Endothelial cell of umbilical vein (primary cell): ENCODE measurements at regions of chr3 and their contacts with region 1.

Region 1: GRCh38 chr3:195162033-195162669 is 108.8 kb downstream of the XXYLT1 start:
- DNase-seq: peak; percentile 99
- H3K4me3 ChIP-seq: no peak overlapping the region
- H3K27ac ChIP-seq: peak overlapping the region; percentile 95
- H3K4me1 ChIP-seq: peaks cover 85% of the 10 kb centered on the region
- H3K27me3 ChIP-seq: no peaks in the 10 kb centered on the region
- CTCF ChIP-seq: no peak
- POLR2A ChIP-seq: peak; percentile 89

Region 2: GRCh38 chr3:195106418-195106906 is 55.7 kb before region 1 on chr3:
- CTCF ChIA-PET with region 1: no interaction called
- POLR2A ChIA-PET with region 1: no interaction called
- dilution Hi-C with region 1: no loop called
- intact Hi-C with region 1: no loop called
- DNase-seq: peak; percentile 76
- H3K4me3 ChIP-seq: no peak overlapping the region
- H3K27ac ChIP-seq: peak overlapping the region; percentile 96
- H3K4me1 ChIP-seq: peaks cover 44% of the 10 kb centered on the region
- H3K27me3 ChIP-seq: no peaks in the 10 kb centered on the region
- CTCF ChIP-seq: peak; percentile 97 to 98
- POLR2A ChIP-seq: no peak

Region 3: DNA sequence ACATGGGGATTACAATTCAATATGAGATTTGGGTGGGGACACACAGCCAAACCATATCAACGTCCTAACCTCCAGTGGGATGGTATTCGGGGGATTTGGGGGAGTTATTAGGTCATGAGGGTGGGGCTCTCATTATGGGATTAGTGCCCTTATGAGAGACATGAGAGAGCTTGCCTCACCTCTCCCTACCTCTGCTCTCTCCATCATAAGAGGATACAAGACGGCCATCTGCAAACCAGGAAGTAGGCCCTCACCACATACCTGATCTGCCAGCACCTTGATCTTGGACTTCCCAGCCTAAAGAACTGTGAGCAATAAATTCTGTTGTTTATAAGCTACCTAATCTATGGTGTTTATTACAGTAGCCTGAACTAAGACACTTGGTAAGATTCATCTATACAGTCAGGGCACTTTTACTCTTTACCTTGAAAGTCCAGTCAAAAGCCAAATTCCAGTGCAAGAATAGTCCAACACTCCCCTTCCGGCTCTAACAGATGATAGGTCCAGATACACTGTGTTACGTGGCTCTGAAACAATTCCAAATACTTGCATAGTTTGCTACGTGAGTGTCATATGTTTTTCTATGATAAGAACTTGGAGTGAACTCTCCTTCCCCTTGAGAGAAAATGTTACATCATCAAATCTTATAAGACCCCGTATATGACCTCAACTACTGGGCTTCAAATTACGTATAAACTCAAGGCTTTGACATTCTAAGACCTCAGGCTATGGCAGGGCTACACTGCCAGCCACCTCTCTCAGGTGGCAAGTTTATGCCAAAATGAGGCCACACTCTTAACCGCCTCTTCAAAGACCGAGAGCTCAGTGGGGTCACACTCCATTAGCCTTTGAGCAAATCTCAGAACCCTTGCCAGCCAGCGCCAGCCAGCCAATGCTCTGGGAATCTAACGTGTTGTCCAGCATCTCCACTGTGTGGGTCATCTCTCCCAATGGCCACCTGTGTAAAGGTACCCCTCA is 21.0 kb before region 1 on chr3:
- CTCF ChIA-PET with region 1: no interaction called
- POLR2A ChIA-PET with region 1: no interaction called
- dilution Hi-C with region 1: no loop called
- intact Hi-C with region 1: loop called (anchors 1 kb)
- DNase-seq: peak; percentile 92
- H3K4me3 ChIP-seq: no peak overlapping the region
- H3K27ac ChIP-seq: peak overlapping the region; percentile 92
- H3K4me1 ChIP-seq: peaks cover 27% of the 10 kb centered on the region
- H3K27me3 ChIP-seq: no peaks in the 10 kb centered on the region
- CTCF ChIP-seq: no peak
- POLR2A ChIP-seq: peak; percentile 67

Region 4: GRCh38 chr3:195172039-195172684 is 10.0 kb after region 1 on chr3:
- CTCF ChIA-PET with region 1: interaction called, 4 read pairs
- POLR2A ChIA-PET with region 1: no interaction called
- dilution Hi-C with region 1: no loop called
- intact Hi-C with region 1: loop called (anchors 1 kb)
- DNase-seq: peak; percentile 75
- H3K4me3 ChIP-seq: no peak overlapping the region
- H3K27ac ChIP-seq: peak overlapping the region; percentile 42
- H3K4me1 ChIP-seq: peaks cover 29% of the 10 kb centered on the region
- H3K27me3 ChIP-seq: no peaks in the 10 kb centered on the region
- CTCF ChIP-seq: no peak
- POLR2A ChIP-seq: no peak

Region 5: GRCh38 chr3:195182470-195182795 is 20.3 kb after region 1 on chr3:
- CTCF ChIA-PET with region 1: interaction called, 5 read pairs
- POLR2A ChIA-PET with region 1: interaction called, 7 read pairs
- dilution Hi-C with region 1: no loop called
- intact Hi-C with region 1: loop called (anchors 1 kb)
- DNase-seq: peak; percentile 96
- H3K4me3 ChIP-seq: no peak overlapping the region
- H3K27ac ChIP-seq: peak overlapping the region; percentile 93
- H3K4me1 ChIP-seq: peaks cover 65% of the 10 kb centered on the region
- H3K27me3 ChIP-seq: no peaks in the 10 kb centered on the region
- CTCF ChIP-seq: no peak
- POLR2A ChIP-seq: no peak

Region 6: DNA sequence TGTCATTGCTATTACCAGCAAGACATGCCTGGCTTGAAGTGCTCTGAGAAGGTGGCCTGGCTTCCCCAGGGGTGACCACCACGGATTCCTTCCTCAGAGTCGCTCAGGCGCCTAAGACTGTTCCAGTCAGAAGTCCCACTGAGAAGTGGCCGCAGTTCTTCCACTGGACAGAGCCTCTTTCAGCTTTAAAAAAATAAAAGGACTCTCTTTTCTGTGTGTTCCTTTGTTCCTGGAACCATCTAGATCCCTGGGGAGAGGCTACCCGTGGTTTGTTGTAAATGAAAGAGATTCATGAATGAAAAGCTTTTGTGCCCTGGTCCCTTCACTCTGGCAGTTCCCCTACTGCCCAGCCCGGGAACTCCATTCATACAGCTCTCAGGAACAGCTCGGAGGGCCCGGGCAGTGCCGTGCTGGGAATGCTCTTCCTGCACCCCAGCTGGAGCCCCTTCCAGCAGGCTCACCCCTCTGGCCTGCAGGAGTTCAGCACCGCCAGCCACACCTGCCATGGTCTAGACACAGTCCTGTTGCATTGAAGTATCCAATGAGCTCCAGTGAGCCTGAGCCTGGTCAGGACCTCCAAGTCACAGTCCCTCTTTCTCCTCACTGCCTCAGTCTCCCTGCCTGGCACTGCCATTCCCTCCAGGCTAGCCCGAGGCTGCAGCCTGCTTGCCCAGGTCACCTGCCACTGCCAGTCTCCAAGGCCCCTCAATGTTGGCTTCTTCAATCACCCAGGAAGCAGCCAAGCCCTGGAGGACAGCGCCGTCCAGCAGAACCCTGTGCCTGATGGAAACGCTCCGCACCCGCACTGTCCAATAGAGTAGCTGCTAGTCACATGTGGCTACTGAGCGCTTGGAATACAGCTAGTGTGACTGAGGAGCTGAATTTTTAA is 33.4 kb after region 1 on chr3:
- CTCF ChIA-PET with region 1: interaction called, 13 read pairs
- POLR2A ChIA-PET with region 1: interaction called, 3 read pairs
- dilution Hi-C with region 1: no loop called
- intact Hi-C with region 1: no loop called
- DNase-seq: peak; percentile 57
- H3K4me3 ChIP-seq: no peak overlapping the region
- H3K27ac ChIP-seq: peak overlapping the region; percentile 79
- H3K4me1 ChIP-seq: peaks cover 45% of the 10 kb centered on the region
- H3K27me3 ChIP-seq: no peaks in the 10 kb centered on the region
- CTCF ChIP-seq: peak in 1 of 2 donors; percentile 30
- POLR2A ChIP-seq: no peak

Region 7: GRCh38 chr3:195204360-195205163 is 42.4 kb after region 1 on chr3:
- CTCF ChIA-PET with region 1: no interaction called
- POLR2A ChIA-PET with region 1: interaction called, 3 read pairs
- dilution Hi-C with region 1: no loop called
- intact Hi-C with region 1: loop called (anchors 1 kb)
- DNase-seq: peak; percentile 90
- H3K4me3 ChIP-seq: peak overlapping the region in 1 of 3 experiments; percentile 4
- H3K27ac ChIP-seq: peak overlapping the region; percentile 67
- H3K4me1 ChIP-seq: peaks cover 26% of the 10 kb centered on the region
- H3K27me3 ChIP-seq: no peaks in the 10 kb centered on the region
- CTCF ChIP-seq: no peak
- POLR2A ChIP-seq: no peak